ENCODE measurements at regions of chr19 and their contacts with region 1.

Region 1: DNA sequence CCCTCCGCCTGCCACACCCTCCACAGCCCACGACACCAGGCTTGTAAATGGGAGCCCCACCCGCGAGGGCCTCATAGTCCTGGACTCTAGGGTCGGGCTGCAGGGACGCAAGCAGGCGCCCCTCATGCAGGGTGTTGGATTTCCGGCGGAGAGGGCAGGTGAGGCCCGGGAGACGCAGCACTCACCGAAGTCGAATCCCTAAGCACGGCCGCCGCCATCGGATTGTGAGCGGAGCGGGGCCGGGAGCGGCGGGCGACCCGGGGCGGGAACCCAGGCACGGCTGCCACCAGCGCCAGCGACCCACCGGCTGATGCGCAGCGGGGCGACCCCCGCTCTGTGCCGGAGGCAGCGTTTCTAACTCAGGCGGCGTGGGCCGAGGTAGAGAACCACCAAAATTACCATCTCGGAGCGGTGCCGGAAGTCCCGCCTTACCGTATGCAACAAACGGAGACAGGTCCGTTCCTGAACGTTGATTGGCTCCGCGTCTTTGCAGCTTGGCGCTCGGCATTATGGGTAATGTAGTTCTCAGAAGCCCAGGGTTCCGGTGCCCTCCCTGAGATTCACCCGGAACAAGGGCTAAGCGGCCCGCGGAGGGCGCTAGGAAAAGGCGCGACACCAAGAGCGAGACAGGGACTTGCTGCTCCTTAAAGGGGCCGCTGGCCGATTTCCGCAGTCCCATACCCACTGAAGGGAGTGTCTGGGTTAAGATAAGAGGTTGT is at the start of gene ZNF416:
- DNase-seq: peak; percentile 79
- ATAC-seq: peak; percentile 92
- H3K4me3 Mint-ChIP-seq: peak within 1 kb of the TSS; percentile 86
- H3K27ac Mint-ChIP-seq: peak within 1 kb of the TSS; percentile 84
- H3K4me1 Mint-ChIP-seq: peaks cover 32% of the 10 kb centered on the region
- H3K27me3 Mint-ChIP-seq: no peaks in the 10 kb centered on the region
- CTCF ChIP-seq: no peak
- total RNA-seq, gene ZNF416: 12.6 and 13.8 TPM in 2 replicates

Region 2: GRCh38 chr19:57527136-57527881 is 51.3 kb before region 1 on chr19 and contains the start of gene ZNF549:
- CTCF ChIA-PET with region 1: no interaction called
- POLR2A ChIA-PET with region 1: no interaction called
- intact Hi-C with region 1: loop called (anchors 1 kb)
- DNase-seq: peak; percentile 78
- ATAC-seq: peak; percentile 99
- H3K4me3 Mint-ChIP-seq: peak within 1 kb of the TSS; percentile 96
- H3K27ac Mint-ChIP-seq: peak within 1 kb of the TSS; percentile 88
- H3K4me1 Mint-ChIP-seq: peaks cover 24% of the 10 kb centered on the region
- H3K27me3 Mint-ChIP-seq: no peaks in the 10 kb centered on the region
- CTCF ChIP-seq: no peak
- total RNA-seq, gene ZNF549: 14.0 and 16.9 TPM in 2 replicates

Region 3: DNA sequence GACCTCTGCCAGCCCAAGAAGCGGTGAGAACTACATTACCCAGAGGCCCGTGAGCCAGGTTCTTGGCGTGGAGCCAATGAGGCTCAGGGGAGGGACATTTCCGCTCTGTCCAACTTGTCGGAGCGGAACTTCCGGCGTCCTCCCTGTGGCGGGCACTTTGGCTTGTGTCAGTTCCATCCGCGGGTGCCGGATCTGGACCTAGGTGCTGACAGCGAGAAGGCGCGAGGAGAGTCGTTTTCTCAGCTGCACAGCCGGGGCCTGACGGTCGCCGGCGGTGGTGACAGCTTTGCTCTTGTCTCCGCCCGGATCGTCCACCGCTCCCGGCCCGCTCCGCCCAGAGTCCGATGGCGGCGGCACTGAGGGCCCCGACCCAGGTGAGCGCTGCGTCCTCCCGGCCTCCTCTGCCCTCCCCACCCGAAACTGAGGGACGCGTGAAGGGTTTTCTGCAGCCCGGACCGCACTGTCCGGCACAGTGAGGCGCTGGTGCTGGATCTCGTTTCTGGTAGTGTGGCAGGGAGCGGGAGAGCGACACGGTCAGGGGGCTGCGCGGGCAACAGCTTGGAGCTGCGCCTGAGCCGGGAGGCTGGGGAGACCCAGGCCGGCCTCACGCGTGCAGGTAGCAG is 21.2 kb after region 1 on chr19 and contains the start of gene ZNF530:
- CTCF ChIA-PET with region 1: no interaction called
- POLR2A ChIA-PET with region 1: no interaction called
- intact Hi-C with region 1: loop called (anchors 1 kb)
- DNase-seq: peak; percentile 77
- ATAC-seq: peak; percentile 98
- H3K4me3 Mint-ChIP-seq: peak within 1 kb of the TSS; percentile 90
- H3K27ac Mint-ChIP-seq: peak within 1 kb of the TSS; percentile 84
- H3K4me1 Mint-ChIP-seq: peaks cover 19% of the 10 kb centered on the region
- H3K27me3 Mint-ChIP-seq: peaks cover 4% of the 10 kb centered on the region
- CTCF ChIP-seq: no peak
- total RNA-seq, gene ZNF530: 7.0 and 7.9 TPM in 2 replicates

Region 4: GRCh38 chr19:57620673-57621199 is 42.1 kb after region 1 on chr19:
- CTCF ChIA-PET with region 1: no interaction called
- POLR2A ChIA-PET with region 1: no interaction called
- intact Hi-C with region 1: no loop called
- DNase-seq: no peak
- ATAC-seq: no peak
- H3K4me3 Mint-ChIP-seq: no peak overlapping the region
- H3K27ac Mint-ChIP-seq: no peak overlapping the region
- H3K4me1 Mint-ChIP-seq: peaks cover 23% of the 10 kb centered on the region
- H3K27me3 Mint-ChIP-seq: no peaks in the 10 kb centered on the region
- CTCF ChIP-seq: no peak

Region 5: DNA sequence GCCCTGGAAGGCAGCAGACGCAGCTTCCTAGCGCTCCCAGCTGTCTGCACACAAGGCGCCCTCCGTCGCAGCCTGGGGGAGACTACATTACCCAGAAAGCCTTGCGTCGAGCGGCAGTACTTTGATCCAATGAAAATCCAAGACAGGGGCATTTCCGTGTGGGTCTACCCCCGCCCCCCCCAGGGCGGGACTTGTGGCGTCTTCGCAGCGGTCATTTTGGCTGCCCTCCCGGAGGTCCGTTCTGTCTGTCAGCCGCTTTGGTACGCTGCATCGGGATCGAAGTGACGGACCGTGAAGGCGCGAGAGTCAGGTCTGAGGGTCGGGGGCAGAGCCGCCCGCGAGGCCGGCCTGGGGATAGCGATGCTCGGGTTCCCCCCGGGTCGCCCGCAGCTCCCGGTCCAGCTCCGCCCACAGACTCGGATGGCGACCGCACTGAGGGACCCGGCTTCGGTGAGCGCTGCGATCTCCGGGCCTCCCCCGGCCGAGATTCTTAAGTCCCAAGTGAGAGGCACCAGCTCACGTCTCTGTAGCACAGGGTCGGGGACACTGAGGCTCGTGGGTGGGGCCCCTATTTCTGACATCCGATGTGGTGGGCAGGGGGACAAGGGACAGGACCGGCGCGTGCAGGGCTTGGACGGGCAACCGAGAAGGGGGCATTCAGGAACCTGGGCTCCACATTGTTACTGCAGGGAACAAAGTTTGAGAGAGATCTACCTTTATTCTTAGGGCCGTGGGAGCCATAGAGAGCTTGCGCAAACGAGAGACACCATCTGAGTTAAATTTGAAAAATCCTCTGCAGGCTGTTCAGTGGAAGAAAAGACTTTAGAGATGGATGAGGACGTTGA is 54.6 kb after region 1 on chr19 and contains the start of gene ZNF211:
- CTCF ChIA-PET with region 1: no interaction called
- POLR2A ChIA-PET with region 1: interaction called, 5 read pairs
- intact Hi-C with region 1: loop called (anchors 1 kb)
- DNase-seq: peak; percentile 81
- ATAC-seq: peak; percentile 100
- H3K4me3 Mint-ChIP-seq: peak within 1 kb of the TSS; percentile 94
- H3K27ac Mint-ChIP-seq: peak within 1 kb of the TSS; percentile 87
- H3K4me1 Mint-ChIP-seq: peaks cover 19% of the 10 kb centered on the region
- H3K27me3 Mint-ChIP-seq: no peaks in the 10 kb centered on the region
- CTCF ChIP-seq: no peak
- total RNA-seq, gene ZNF211: 22.0 and 26.0 TPM in 2 replicates

Region 6: DNA sequence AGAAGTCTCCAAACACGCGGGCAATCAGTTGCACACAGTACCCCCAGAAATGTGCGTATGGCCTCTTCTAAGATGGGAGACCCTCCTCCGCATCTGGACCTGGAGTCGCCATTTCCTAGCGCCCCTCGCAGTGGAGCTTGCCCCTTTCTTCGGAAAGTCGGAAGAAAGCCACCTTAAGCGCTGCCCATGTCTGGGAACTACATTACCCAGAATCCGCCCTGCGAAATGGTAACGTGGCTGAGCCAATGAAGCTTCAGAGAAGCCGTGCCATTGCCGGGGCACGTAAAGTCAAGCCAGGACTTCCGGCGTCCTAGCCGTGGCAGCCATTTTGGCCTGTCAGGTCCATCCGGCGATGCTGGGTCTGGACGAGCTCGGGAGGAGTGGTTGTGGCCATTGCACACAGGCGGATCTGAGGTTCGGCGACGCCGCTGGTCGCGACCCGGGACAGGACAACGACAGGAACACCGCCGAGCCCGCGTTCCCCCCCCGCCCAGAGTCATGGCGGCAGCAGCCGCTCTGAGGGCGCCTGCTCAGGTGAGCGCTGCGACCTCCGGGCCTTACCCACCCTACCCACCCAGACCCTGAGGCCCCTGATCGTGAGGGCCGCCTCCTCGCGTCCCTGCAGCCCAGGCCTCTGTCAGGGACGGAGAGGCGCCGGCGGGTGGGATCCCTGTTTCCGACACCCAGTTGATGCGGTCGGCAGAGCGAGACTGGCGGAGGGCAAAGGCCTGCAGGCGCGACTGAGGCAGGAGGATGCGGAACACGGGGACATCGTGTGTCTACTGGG is 190.9 kb after region 1 on chr19 and contains the start of gene ZNF586:
- CTCF ChIA-PET with region 1: no interaction called
- POLR2A ChIA-PET with region 1: no interaction called
- intact Hi-C with region 1: loop called (anchors 2 kb)
- DNase-seq: peak; percentile 76
- ATAC-seq: peak; percentile 98
- H3K4me3 Mint-ChIP-seq: peak within 1 kb of the TSS; percentile 95
- H3K27ac Mint-ChIP-seq: peak within 1 kb of the TSS; percentile 86
- H3K4me1 Mint-ChIP-seq: peaks cover 54% of the 10 kb centered on the region
- H3K27me3 Mint-ChIP-seq: no peaks in the 10 kb centered on the region
- CTCF ChIP-seq: no peak
- total RNA-seq, gene ZNF586: 29.4 and 33.7 TPM in 2 replicates

Measured in activated B cell treated with CpG ODN at 0.5 μM for 24 hours (primary cell).